Activated CD8-positive, alpha-beta T cell treated with anti-CD3 and anti-CD28 coated beads for 36 hours (primary cell): ENCODE measurements at regions of chrX and their contacts with region 1.

Region 1: DNA sequence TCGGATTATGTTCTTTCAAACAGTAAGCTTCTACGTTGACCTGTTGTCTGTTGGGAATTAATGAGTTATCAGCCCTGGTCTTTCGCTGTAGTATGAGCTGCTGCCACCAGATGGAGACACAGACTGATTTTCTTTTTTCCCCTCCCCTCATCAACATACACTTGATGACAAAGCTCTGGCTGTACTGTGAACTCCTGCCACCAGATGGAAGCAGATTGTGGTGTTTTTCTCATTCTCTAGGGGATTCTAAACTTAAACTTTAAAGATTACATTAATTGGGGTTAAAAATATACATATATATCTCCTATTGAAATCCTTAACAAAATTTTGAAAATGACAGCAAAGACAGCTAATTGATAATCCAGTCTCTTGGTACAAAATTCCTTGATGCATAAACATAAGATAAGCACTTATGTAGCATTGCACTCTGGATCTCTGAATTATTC is 44.8 kb downstream of the SMS start:
- DNase-seq: peak; percentile 79
- ATAC-seq: peak; percentile 87
- H3K4me3 Mint-ChIP-seq: no peak overlapping the region
- H3K27ac Mint-ChIP-seq: peak overlapping the region; percentile 52
- H3K4me1 Mint-ChIP-seq: peaks cover 30% of the 10 kb centered on the region
- H3K27me3 Mint-ChIP-seq: no peaks in the 10 kb centered on the region
- CTCF ChIP-seq: peak; percentile 87

Region 2: GRCh38 chrX:21813612-21814370 is 171.6 kb before region 1 on chrX:
- CTCF ChIA-PET with region 1: no interaction called
- POLR2A ChIA-PET with region 1: no interaction called
- intact Hi-C with region 1: no loop called
- DNase-seq: no peak
- ATAC-seq: no peak
- H3K4me3 Mint-ChIP-seq: no peak overlapping the region
- H3K27ac Mint-ChIP-seq: no peak overlapping the region
- H3K4me1 Mint-ChIP-seq: no peaks in the 10 kb centered on the region
- H3K27me3 Mint-ChIP-seq: no peaks in the 10 kb centered on the region
- CTCF ChIP-seq: no peak

Region 3: GRCh38 chrX:21952624-21953023 is 32.7 kb before region 1 on chrX:
- CTCF ChIA-PET with region 1: no interaction called
- POLR2A ChIA-PET with region 1: no interaction called
- intact Hi-C with region 1: no loop called
- DNase-seq: no peak
- ATAC-seq: no peak
- H3K4me3 Mint-ChIP-seq: no peak overlapping the region
- H3K27ac Mint-ChIP-seq: no peak overlapping the region
- H3K4me1 Mint-ChIP-seq: peaks cover 43% of the 10 kb centered on the region
- H3K27me3 Mint-ChIP-seq: no peaks in the 10 kb centered on the region
- CTCF ChIP-seq: no peak

Region 4: DNA sequence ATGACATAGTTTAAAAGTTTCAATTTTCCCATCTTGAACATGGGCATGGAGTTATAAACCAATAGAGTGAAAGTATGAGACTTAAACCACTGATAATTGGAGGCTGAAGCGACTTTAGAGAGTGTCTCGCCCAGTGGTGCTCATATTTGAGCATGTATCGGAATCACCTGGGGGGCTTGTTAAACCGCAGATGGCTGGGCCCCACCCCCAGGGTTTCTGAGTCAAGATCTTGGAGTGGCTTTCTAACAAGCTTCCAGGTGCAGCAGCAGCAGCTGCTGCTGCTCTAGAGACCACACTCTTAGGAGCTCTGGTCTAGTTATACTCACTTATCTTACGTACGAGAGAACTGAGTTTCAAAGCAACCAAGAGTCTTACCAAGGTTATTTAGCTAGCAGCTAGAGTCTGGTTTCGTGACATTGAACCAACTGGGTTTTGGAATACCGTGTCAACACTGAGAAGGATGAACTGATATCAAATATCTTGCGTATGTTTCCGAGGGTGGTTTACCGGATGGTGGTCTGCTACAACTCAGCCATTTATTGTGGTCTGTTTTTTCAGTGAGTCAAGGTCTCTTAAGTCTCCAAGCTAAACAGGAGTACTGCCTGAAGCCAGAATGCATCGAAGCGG is 52.7 kb after region 1 on chrX:
- CTCF ChIA-PET with region 1: interaction called, 9 read pairs
- POLR2A ChIA-PET with region 1: no interaction called
- intact Hi-C with region 1: loop called (anchors 5 kb)
- DNase-seq: peak; percentile 64
- ATAC-seq: peak; percentile 66
- H3K4me3 Mint-ChIP-seq: peak overlapping the region; percentile 71
- H3K27ac Mint-ChIP-seq: peak overlapping the region; percentile 94
- H3K4me1 Mint-ChIP-seq: peaks cover 25% of the 10 kb centered on the region
- H3K27me3 Mint-ChIP-seq: no peaks in the 10 kb centered on the region
- CTCF ChIP-seq: no peak

Region 5: GRCh38 chrX:22122510-22122909 is 137.2 kb after region 1 on chrX:
- CTCF ChIA-PET with region 1: interaction called, 10 read pairs
- POLR2A ChIA-PET with region 1: no interaction called
- intact Hi-C with region 1: no loop called
- DNase-seq: no peak
- ATAC-seq: no peak
- H3K4me3 Mint-ChIP-seq: no peak overlapping the region
- H3K27ac Mint-ChIP-seq: no peak overlapping the region
- H3K4me1 Mint-ChIP-seq: peaks cover 4% of the 10 kb centered on the region
- H3K27me3 Mint-ChIP-seq: no peaks in the 10 kb centered on the region
- CTCF ChIP-seq: no peak

Region 6: DNA sequence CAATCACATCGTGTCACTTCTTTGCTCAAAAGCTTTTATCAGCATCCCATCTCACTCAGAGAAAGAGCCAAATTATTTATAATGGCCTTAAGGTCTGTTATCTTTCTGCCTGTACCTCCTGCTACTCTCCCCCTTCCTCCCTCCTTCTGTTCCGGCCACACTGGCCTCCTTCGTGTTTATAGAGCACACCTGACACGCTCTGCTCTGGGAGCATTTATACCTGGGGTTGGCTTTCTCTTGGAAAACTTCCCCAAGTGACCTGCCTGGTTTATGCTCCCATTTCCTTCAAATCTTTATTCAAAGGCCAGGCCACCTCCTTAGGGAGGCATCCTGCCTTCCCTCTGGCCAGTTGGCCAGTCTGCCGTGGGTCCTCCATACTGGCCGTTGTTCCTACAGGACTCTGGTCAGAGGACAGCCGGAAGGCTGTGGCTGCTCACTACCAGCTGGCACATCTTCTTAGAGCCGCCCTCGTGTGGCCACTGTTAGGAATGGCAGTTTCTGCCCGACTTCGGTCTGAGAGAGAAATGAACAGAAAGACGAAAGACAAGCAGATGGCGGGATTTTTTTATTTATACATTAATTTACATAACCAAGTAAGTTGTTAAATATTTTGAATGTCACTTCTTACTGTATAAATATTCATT is 207.2 kb after region 1 on chrX:
- CTCF ChIA-PET with region 1: interaction called, 12 read pairs
- POLR2A ChIA-PET with region 1: interaction called, 3 read pairs
- intact Hi-C with region 1: loop called (anchors 5 kb)
- DNase-seq: peak; percentile 58
- ATAC-seq: peak; percentile 65
- H3K4me3 Mint-ChIP-seq: no peak overlapping the region
- H3K27ac Mint-ChIP-seq: no peak overlapping the region
- H3K4me1 Mint-ChIP-seq: peaks cover 11% of the 10 kb centered on the region
- H3K27me3 Mint-ChIP-seq: no peaks in the 10 kb centered on the region
- CTCF ChIP-seq: peak; percentile 61